ENCODE measurements at regions of chr17 and their contacts with region 1.

Region 1: GRCh38 chr17:82065638-82066303 is at the start of gene DUS1L:
- DNase-seq: peak; percentile 76 to 91 (median 89)
- ATAC-seq: peak; percentile 81
- H3K4me3 ChIP-seq: peak within 1 kb of the TSS; percentile 99
- H3K27ac ChIP-seq: peak within 1 kb of the TSS; percentile 87
- H3K4me1 ChIP-seq: peaks cover 3 to 54% of the 10 kb centered on the region in 2 experiments; a peak in 3 of 5 replicates
- H3K27me3 ChIP-seq: no peaks in the 10 kb centered on the region
- CTCF ChIP-seq: no peak
- EP300 ChIP-seq: 0 out of 2 replicates have a peak, but pooled peaks have one; percentile 31
- POLR2A ChIP-seq: no peak
- RAD21 ChIP-seq: no peak
- polyA plus RNA-seq, gene DUS1L: 7.8 to 11.3 TPM

Region 2: GRCh38 chr17:81511804-81512559 is 553.8 kb before region 1 on chr17:
- CTCF ChIA-PET with region 1: no interaction called
- POLR2A ChIA-PET with region 1: no interaction called
- in situ Hi-C with region 1: no loop called
- intact Hi-C with region 1: no loop called
- DNase-seq: no peak
- ATAC-seq: peak; percentile 6
- H3K4me3 ChIP-seq: peak overlapping the region; percentile 86
- H3K27ac ChIP-seq: peak overlapping the region; percentile 84
- H3K4me1 ChIP-seq: peaks cover 35 to 58% of the 10 kb centered on the region in 2 experiments; a peak in 4 of 5 replicates
- H3K27me3 ChIP-seq: no peaks in the 10 kb centered on the region
- CTCF ChIP-seq: no peak
- EP300 ChIP-seq: no peak
- POLR2A ChIP-seq: peak; percentile 82
- RAD21 ChIP-seq: no peak

Region 3: GRCh38 chr17:82054351-82055022 is 11.3 kb before region 1 on chr17:
- CTCF ChIA-PET with region 1: no interaction called
- POLR2A ChIA-PET with region 1: interaction called, 11 read pairs
- in situ Hi-C with region 1: no loop called
- intact Hi-C with region 1: no loop called
- DNase-seq: no peak
- ATAC-seq: no peak
- H3K4me3 ChIP-seq: no peak overlapping the region
- H3K27ac ChIP-seq: no peak overlapping the region
- H3K4me1 ChIP-seq: peaks cover 6 to 90% of the 10 kb centered on the region in 2 experiments; a peak in 3 of 5 replicates
- H3K27me3 ChIP-seq: no peaks in the 10 kb centered on the region
- CTCF ChIP-seq: no peak
- EP300 ChIP-seq: no peak
- POLR2A ChIP-seq: no peak
- RAD21 ChIP-seq: no peak

Region 4: DNA sequence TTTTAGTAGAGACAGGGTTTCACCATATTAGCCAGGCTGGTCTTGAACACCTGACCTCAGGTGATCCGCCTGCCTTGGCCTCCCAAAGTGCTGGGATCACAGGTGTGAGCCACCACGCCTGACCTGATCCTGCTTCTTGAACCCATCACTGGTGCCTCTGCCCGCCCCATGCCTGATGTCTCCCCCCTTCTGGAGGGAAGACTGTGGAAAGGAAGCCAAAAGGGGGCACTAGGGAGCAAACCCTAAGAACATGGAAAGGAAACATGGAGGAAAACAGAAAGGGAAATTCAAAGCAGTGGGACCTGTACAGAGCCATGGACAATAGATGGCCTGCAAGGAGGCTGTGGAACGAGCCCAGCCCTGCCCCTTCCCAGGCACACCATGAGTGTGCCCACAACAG is 63.3 kb after region 1 on chr17:
- CTCF ChIA-PET with region 1: no interaction called
- POLR2A ChIA-PET with region 1: no interaction called
- in situ Hi-C with region 1: no loop called
- intact Hi-C with region 1: no loop called
- DNase-seq: peak in 1 of 4 experiments; percentile 36
- ATAC-seq: peak; percentile 69
- H3K4me3 ChIP-seq: no peak overlapping the region
- H3K27ac ChIP-seq: no peak overlapping the region
- H3K4me1 ChIP-seq: peaks cover 3 to 10% of the 10 kb centered on the region in 2 experiments; a peak in 4 of 5 replicates
- H3K27me3 ChIP-seq: no peaks in the 10 kb centered on the region
- CTCF ChIP-seq: peak; percentile 45 to 54 (median 51)
- EP300 ChIP-seq: no peak
- POLR2A ChIP-seq: no peak
- RAD21 ChIP-seq: peak in 1 of 2 experiments; percentile 7; a peak in 1 of 4 replicates

Measured in K562 (cell line).